H1 (cell line): ENCODE measurements at regions of chr16 and their contacts with region 1.

Region 1: GRCh38 chr16:54957403-54958171 is 26.9 kb downstream of the IRX5 start:
- DNase-seq: peak in 1 of 2 experiments; percentile 69
- H3K4me3 ChIP-seq: no peak overlapping the region
- H3K27ac ChIP-seq: no peak overlapping the region
- H3K4me1 ChIP-seq: no peaks in the 10 kb centered on the region
- H3K27me3 ChIP-seq: no peaks in the 10 kb centered on the region
- CTCF ChIP-seq: peak; percentile 46 to 63 (median 61)
- EP300 ChIP-seq: no peak
- POLR2A ChIP-seq: no peak
- RAD21 ChIP-seq: peak; percentile 66 to 68

Region 2: GRCh38 chr16:54923055-54923473 is 34.5 kb before region 1 on chr16:
- CTCF ChIA-PET with region 1: no interaction called
- POLR2A ChIA-PET with region 1: no interaction called
- DNase-seq: no peak
- H3K4me3 ChIP-seq: no peak overlapping the region
- H3K27ac ChIP-seq: no peak overlapping the region
- H3K4me1 ChIP-seq: peaks cover 0 to 3% (median 1%) of the 10 kb centered on the region in 4 experiments; a peak in 2 of 7 replicates
- H3K27me3 ChIP-seq: peaks cover 6 to 25% (median 14%) of the 10 kb centered on the region in 4 experiments; a peak in 6 of 7 replicates
- CTCF ChIP-seq: no peak
- EP300 ChIP-seq: no peak
- POLR2A ChIP-seq: no peak
- RAD21 ChIP-seq: no peak

Region 3: GRCh38 chr16:54936979-54937670 is 20.5 kb before region 1 on chr16:
- CTCF ChIA-PET with region 1: interaction called, 29 read pairs
- POLR2A ChIA-PET with region 1: no interaction called
- DNase-seq: peak in 1 of 2 experiments; percentile 90
- H3K4me3 ChIP-seq: peak overlapping the region; percentile 31 to 68 (median 58)
- H3K27ac ChIP-seq: no peak overlapping the region
- H3K4me1 ChIP-seq: peaks cover 0 to 37% (median 25%) of the 10 kb centered on the region in 4 experiments; a peak in 6 of 7 replicates
- H3K27me3 ChIP-seq: peaks cover 61 to 93% (median 87%) of the 10 kb centered on the region in 4 experiments
- CTCF ChIP-seq: peak; percentile 57 to 83 (median 83)
- EP300 ChIP-seq: no peak
- POLR2A ChIP-seq: no peak
- RAD21 ChIP-seq: peak; percentile 50 to 56

Region 4: DNA sequence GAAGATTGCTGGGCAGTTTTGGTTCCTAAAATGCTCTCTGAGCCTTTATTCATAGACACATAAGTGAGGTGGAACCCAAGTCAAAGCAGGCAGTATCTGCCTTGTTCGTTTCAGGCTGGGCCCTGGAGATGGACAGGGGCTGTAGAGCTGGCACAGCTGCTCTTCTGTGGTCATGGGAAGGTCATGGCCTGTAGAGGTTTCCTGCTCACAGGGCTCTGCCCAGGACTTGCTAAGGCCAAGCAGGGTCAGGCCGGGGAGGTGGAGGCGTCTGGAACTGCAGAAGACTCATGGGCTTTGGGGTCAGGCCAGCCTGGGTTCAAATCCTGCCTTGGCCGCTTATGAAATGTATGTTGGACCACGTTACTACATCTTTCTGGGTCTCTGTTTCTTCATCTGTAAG is 23.2 kb after region 1 on chr16:
- CTCF ChIA-PET with region 1: interaction called, 11 read pairs
- POLR2A ChIA-PET with region 1: no interaction called
- DNase-seq: no peak
- H3K4me3 ChIP-seq: no peak overlapping the region
- H3K27ac ChIP-seq: no peak overlapping the region
- H3K4me1 ChIP-seq: 0 out of 7 replicates have a peak, but pooled peaks cover 0 to 2% (median 0%) of the 10 kb centered on the region in 4 experiments
- H3K27me3 ChIP-seq: no peaks in the 10 kb centered on the region; a peak in 1 of 7 replicates
- CTCF ChIP-seq: no peak
- EP300 ChIP-seq: no peak
- POLR2A ChIP-seq: no peak
- RAD21 ChIP-seq: no peak

Region 5: GRCh38 chr16:55021595-55022475 is 64.2 kb after region 1 on chr16:
- CTCF ChIA-PET with region 1: interaction called, 15 read pairs
- POLR2A ChIA-PET with region 1: no interaction called
- DNase-seq: peak; percentile 15 to 63
- H3K4me3 ChIP-seq: peak overlapping the region in 2 of 4 experiments; percentile 10 to 19; a peak in 1 of 8 replicates
- H3K27ac ChIP-seq: no peak overlapping the region
- H3K4me1 ChIP-seq: no peaks in the 10 kb centered on the region
- H3K27me3 ChIP-seq: no peaks in the 10 kb centered on the region; a peak in 1 of 7 replicates
- CTCF ChIP-seq: peak; percentile 25 to 62 (median 52)
- EP300 ChIP-seq: no peak
- POLR2A ChIP-seq: no peak
- RAD21 ChIP-seq: peak; percentile 37 to 56

Region 6: GRCh38 chr16:55043499-55043898 is 85.9 kb after region 1 on chr16:
- CTCF ChIA-PET with region 1: interaction called, 20 read pairs
- POLR2A ChIA-PET with region 1: no interaction called
- DNase-seq: no peak
- H3K4me3 ChIP-seq: no peak overlapping the region
- H3K27ac ChIP-seq: no peak overlapping the region
- H3K4me1 ChIP-seq: no peaks in the 10 kb centered on the region
- H3K27me3 ChIP-seq: 0 out of 7 replicates have a peak, but pooled peaks cover 0 to 2% (median 0%) of the 10 kb centered on the region in 4 experiments
- CTCF ChIP-seq: peak; percentile 24 to 45 (median 39)
- EP300 ChIP-seq: no peak
- POLR2A ChIP-seq: no peak
- RAD21 ChIP-seq: peak; percentile 14 to 50; a peak in 3 of 4 replicates